OCI-LY7 (cell line): ENCODE measurements at regions of chr3 and their contacts with region 1.

Region 1: DNA sequence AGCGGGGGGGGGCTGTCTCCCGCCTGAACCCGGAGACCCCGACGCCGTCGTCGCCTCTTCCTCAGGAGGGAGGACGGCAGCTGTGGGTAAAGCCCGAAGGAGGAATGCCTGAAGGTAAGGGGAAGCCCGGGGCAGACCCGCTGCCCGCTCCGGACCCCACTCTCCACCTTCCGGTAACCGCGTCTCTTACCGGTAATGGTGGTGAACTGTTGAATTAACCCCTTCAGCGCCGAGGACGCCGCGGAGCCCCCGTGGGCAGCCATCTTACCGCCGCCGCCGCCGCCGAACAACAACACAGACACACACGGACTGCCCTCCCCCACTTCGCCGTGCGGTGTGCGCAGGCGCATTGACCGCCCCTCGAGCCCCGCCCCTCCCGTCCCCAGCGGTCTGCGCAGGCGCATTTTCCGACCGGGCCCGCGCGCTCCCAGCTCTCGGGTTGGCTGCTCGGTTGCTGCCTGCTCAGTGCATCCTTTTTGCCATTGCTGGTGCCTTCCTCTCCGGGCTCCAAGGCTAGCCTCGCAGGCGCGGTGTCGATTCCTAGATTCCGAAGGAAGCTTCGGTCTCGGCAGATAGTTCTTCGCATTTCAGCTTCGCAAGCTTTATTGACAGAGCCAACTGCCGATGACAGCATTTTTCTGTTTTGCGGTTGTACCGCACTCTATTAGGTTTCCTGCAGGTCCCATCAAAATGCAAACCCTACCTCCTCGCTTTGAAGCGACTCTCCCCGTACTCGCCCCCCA is at the start of gene UBXN7:
- DNase-seq: peak; percentile 94
- H3K4me3 ChIP-seq: peak within 1 kb of the TSS; percentile 98
- H3K27ac ChIP-seq: peak within 1 kb of the TSS; percentile 71
- H3K4me1 ChIP-seq: peaks cover 18% of the 10 kb centered on the region
- CTCF ChIP-seq: no peak
- total RNA-seq, gene UBXN7: 12.7 and 28.9 TPM in 2 replicates

Region 2: GRCh38 chr3:196317687-196318467 is 114.4 kb before region 1 on chr3 and contains the start of gene DYNLT2B:
- CTCF ChIA-PET with region 1: no interaction called
- POLR2A ChIA-PET with region 1: interaction called, 4 read pairs
- intact Hi-C with region 1: loop called (anchors 1 kb)
- DNase-seq: peak; percentile 89
- H3K4me3 ChIP-seq: peak within 1 kb of the TSS; percentile 75
- H3K27ac ChIP-seq: peak within 1 kb of the TSS; percentile 61
- H3K4me1 ChIP-seq: peaks cover 5% of the 10 kb centered on the region
- CTCF ChIP-seq: peak; percentile 28; the same call in 1 of the 2 replicates
- total RNA-seq, gene DYNLT2B: 17.9 and 18.1 TPM in 2 replicates